ENCODE measurements at regions of chr17 and their contacts with region 1.

Region 1: DNA sequence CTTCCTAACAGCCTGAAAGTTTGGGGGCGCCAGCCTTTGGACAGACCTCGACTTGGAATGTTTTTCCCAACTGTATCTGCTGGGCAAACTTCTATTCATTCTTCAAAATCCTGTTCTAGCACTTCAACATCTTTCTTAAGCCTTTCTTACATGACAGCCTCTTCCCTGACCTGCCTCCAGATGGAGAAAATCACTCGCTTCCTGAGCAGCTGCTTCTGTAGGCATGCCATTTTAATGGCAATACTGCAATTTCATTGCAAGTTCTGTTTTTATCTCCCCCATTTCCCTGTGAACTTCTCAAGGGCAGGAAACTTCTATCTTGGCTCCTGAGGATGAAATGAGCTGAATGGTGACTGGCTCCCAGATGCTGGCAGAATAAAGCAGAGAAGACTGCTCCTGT is 128.8 kb upstream of the ASIC2 start:
- DNase-seq: no peak
- ATAC-seq: no peak

Region 2: GRCh38 chr17:33038740-33039139 is 383.2 kb before region 1 on chr17:
- intact Hi-C with region 1: loop called (anchors 5 kb)
- DNase-seq: peak; percentile 69
- ATAC-seq: peak; percentile 36

Region 3: DNA sequence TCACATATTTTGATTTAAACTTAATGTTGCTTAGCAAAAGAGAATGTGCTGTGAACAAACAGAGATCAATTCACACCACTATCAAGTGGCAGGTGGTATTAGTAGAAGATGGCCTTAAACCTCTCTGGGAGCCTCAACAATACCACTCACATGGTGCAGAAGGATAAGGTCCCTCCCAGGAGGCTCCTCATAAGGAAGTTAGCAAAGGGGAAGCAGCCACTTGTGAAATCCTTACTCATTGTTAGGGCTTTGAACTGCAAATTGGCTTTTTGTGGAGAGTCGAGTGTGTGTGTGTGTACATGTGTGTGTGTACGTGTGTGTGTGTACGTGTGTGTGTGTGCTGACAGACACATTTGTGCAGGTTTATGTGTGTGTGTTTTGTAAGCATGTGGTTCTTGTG is 79.9 kb before region 1 on chr17:
- intact Hi-C with region 1: no loop called
- DNase-seq: no peak
- ATAC-seq: no peak

Measured in sciatic nerve (tissue), 2 donors.